ENCODE measurements at regions of chr2 and their contacts with region 1.

Region 1: GRCh38 chr2:64052468-64053241 is 33.4 kb upstream of the VPS54 start:
- DNase-seq: no peak

Region 2: GRCh38 chr2:63399156-63399555 is 653.5 kb before region 1 on chr2:
- intact Hi-C with region 1: no loop called
- DNase-seq: no peak

Region 3: DNA sequence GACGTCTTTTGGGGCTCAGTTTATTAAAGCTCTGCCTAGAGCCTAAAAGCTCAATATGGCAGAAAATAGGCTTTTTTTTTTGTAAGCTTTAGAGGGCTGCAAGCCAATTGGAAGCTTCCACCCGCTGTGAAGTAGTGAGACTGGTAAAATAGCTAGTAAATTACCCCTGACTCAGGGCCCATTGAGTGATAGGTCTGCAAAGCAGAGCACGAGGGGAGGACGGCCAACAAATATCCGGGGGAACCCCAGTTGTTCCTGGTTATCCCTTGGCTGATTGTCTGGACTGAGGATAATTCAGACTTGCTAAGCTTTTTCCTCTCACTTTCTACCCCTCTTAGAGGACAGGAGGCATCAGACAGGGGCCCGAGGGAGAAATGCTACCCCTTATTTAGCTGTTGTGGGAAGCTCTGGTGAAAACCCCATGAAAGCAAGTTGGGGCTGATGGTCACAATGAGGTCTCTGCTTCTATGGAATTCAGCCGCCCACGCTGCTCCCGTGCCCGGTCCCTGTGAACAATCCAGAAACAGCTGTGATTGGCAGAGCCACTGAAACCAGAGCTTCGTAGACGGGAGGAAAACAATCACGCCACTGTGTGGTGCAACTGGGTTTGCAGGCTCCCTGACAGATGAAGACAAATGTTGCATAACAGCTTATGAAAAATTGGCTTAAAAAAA is 259.4 kb after region 1 on chr2:
- intact Hi-C with region 1: loop called (anchors 1 kb)
- DNase-seq: peak; percentile 85

Region 4: GRCh38 chr2:64562148-64562784 is 509.6 kb after region 1 on chr2:
- intact Hi-C with region 1: loop called (anchors 10 kb)
- DNase-seq: no peak

Region 5: GRCh38 chr2:64873472-64873924 is 820.8 kb after region 1 on chr2:
- intact Hi-C with region 1: loop called (anchors 10 kb)
- DNase-seq: peak; percentile 93